MCF 10A (cell line): ENCODE measurements at regions of chr2 and their contacts with region 1.

Region 1: DNA sequence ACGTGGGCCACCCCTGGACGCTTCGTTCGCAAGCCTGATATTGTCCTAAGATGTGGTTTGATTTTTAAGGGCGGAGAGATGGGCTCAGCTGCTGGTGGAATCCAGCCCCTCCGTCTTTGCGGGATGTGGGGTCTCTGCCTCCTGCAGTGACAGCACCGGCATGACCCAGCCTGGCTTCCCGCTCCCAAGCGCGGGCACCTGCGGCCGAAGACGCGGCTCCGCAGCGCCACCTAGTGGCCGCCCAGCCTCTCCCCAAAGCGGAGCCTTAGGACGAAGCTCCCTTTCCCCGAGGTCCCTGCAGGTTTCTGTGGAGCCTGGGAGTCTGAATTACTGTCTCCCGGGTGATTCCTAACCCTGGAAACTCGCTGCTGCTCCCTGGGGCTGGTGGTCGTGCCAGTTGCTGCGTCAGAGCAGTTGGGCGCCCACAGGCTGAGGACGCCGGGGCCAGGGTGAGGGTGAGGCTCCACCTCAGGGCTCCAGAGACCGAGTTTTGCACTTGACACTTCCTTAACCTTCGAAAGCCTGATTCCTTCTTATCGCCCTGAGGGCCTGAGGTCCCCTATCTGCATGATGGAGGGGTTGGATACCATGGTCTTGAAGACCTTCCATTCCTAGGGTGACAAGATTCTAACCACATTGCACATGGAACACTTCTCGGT is 137.5 kb downstream of the TPO start:
- DNase-seq: peak; percentile 54
- H3K4me3 Mint-ChIP-seq: no peak overlapping the region
- H3K27ac Mint-ChIP-seq: no peak overlapping the region
- H3K4me1 Mint-ChIP-seq: peaks cover 13% of the 10 kb centered on the region
- H3K27me3 Mint-ChIP-seq: no peaks in the 10 kb centered on the region
- CTCF ChIP-seq: peak; percentile 98

Region 2: DNA sequence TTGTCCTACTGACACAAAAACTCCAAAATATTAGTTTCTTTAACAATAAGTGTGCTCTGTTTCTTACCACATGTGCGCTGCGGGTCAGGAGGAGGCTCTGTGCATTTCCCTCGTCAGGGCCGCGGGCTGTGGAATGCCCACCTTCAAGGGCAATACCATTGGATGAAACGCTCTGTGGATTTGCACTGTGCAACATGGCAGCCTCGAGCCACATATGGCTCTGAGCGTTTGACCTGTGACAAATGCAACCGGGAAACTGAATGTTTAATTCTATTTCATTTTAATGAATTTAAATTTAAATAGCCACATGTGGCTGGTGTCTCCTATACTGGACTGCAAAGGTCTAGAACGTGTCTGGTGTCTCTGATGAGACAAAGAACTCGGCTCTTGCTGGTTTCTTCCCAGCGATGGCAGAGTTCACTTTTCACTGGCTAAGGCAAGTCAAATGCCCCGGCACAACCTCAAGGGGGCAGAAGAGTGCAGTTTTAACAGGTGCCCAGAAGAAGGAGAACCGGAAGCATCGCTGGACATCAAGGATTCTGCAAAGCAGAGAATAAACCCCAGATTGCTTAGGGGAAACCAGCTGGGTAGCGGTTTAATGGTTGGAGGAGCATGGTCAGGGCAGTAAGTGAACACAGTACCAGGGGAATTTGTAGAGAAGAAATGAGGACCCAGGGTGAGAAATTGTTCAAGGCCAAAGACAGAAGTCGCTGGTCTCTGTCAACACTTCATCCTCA is 836.6 kb before region 1 on chr2:
- CTCF ChIA-PET with region 1: interaction called, 69 read pairs
- POLR2A ChIA-PET with region 1: no interaction called
- intact Hi-C with region 1: loop called (anchors 1 kb)
- DNase-seq: peak; percentile 75
- H3K4me3 Mint-ChIP-seq: no peak overlapping the region
- H3K27ac Mint-ChIP-seq: no peak overlapping the region
- H3K4me1 Mint-ChIP-seq: peaks cover 5% of the 10 kb centered on the region
- H3K27me3 Mint-ChIP-seq: peaks cover 28% of the 10 kb centered on the region
- CTCF ChIP-seq: peak; percentile 65

Region 3: GRCh38 chr2:950080-950966 is 600.5 kb before region 1 on chr2 and contains the start of gene SNTG2:
- CTCF ChIA-PET with region 1: interaction called, 118 read pairs
- POLR2A ChIA-PET with region 1: interaction called, 3 read pairs
- intact Hi-C with region 1: loop called (anchors 1 kb)
- DNase-seq: no peak
- H3K4me3 Mint-ChIP-seq: peak within 1 kb of the TSS; percentile 19
- H3K27ac Mint-ChIP-seq: no peak within 1 kb of the TSS
- H3K4me1 Mint-ChIP-seq: no peaks in the 10 kb centered on the region
- H3K27me3 Mint-ChIP-seq: peaks cover 11% of the 10 kb centered on the region
- CTCF ChIP-seq: no peak
- total RNA-seq, gene SNTG2: not detected in 2 replicates

Region 4: GRCh38 chr2:1563943-1564891 is 13.4 kb after region 1 on chr2:
- CTCF ChIA-PET with region 1: interaction called, 47 read pairs
- POLR2A ChIA-PET with region 1: no interaction called
- intact Hi-C with region 1: no loop called
- DNase-seq: no peak
- H3K4me3 Mint-ChIP-seq: no peak overlapping the region
- H3K27ac Mint-ChIP-seq: no peak overlapping the region
- H3K4me1 Mint-ChIP-seq: no peaks in the 10 kb centered on the region
- H3K27me3 Mint-ChIP-seq: peaks cover 11% of the 10 kb centered on the region
- CTCF ChIP-seq: no peak

Region 5: DNA sequence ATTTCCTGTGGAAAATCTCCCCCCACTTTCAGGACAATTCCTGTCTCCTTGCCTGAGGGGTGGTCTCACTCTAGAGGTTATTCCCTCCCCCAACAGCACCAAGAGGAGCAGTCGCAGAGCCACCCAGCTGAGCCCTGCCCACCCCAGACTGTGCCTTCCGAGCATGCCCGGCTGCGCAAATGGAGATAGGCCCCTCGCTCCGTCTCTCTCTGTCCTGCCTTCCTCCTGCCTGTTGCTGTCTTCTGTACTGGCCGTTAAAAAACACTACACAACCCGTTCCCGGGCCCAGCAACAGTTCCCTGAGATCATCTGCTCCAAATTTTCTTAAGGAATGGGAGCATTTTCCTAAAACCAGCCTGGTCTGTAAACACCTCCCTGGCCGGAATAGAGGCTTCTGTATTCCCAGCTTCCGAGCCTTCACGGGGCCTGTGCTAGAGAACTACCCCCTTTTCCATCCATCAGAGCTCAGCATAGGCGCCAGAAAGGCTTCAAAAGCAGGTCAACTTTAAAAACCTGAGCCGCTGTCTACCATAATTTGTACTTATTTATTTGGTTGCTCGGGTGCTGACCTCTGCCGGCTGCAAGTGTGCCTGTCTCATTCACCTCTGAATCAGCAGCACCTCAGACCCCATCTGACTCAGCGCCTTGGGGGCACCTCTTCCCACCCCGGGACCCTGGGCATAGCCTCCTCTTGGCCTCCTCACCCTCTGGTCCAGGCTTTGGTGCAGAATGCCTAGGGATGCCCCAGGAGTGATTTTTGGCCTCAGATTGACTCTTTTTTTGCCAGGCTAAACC is 34.1 kb after region 1 on chr2:
- CTCF ChIA-PET with region 1: interaction called, 11 read pairs
- POLR2A ChIA-PET with region 1: no interaction called
- intact Hi-C with region 1: no loop called
- DNase-seq: peak; percentile 34
- H3K4me3 Mint-ChIP-seq: no peak overlapping the region
- H3K27ac Mint-ChIP-seq: no peak overlapping the region
- H3K4me1 Mint-ChIP-seq: peaks cover 13% of the 10 kb centered on the region
- H3K27me3 Mint-ChIP-seq: no peaks in the 10 kb centered on the region
- CTCF ChIP-seq: peak; percentile 34

Region 6: DNA sequence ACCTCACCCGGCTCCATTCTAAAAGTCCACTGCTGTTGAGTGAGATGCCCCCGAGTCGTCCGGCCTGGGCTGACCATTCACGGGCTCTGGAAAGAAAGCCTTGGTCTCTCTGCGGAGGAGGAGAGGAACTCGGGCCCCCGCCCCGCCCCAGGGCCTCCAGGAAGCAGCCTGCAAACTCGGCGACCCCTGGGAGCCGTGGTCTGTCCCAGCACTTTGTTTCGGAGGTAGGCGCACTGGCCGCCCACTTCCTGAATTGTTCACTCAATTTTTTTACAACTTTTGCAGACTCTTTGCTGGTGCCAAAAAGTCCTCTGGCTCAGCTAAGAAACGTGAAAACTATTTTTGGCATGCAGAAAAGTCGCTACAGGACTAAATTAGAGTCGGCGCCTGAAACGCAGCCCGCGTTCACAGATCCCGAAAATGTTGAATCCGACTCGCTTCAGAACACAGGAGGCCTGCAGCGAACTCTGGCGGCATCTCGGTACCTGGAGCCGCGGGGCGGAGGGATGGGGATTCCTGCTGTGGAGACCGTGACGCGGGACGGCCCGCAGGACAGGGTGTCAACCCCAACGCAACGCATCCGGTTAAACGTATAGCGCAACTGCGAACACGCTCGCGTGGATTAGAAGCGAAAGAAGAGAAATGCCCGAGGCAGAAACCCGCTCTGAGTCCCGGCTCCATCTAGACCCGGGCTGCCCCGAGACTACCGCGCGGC is 192.1 kb after region 1 on chr2:
- CTCF ChIA-PET with region 1: interaction called, 9 read pairs
- POLR2A ChIA-PET with region 1: interaction called, 4 read pairs
- intact Hi-C with region 1: loop called (anchors 1 kb)
- DNase-seq: peak; percentile 91
- H3K4me3 Mint-ChIP-seq: peak overlapping the region; percentile 79
- H3K27ac Mint-ChIP-seq: peak overlapping the region; percentile 90
- H3K4me1 Mint-ChIP-seq: peaks cover 7% of the 10 kb centered on the region
- H3K27me3 Mint-ChIP-seq: no peaks in the 10 kb centered on the region
- CTCF ChIP-seq: peak; percentile 66

Region 7: DNA sequence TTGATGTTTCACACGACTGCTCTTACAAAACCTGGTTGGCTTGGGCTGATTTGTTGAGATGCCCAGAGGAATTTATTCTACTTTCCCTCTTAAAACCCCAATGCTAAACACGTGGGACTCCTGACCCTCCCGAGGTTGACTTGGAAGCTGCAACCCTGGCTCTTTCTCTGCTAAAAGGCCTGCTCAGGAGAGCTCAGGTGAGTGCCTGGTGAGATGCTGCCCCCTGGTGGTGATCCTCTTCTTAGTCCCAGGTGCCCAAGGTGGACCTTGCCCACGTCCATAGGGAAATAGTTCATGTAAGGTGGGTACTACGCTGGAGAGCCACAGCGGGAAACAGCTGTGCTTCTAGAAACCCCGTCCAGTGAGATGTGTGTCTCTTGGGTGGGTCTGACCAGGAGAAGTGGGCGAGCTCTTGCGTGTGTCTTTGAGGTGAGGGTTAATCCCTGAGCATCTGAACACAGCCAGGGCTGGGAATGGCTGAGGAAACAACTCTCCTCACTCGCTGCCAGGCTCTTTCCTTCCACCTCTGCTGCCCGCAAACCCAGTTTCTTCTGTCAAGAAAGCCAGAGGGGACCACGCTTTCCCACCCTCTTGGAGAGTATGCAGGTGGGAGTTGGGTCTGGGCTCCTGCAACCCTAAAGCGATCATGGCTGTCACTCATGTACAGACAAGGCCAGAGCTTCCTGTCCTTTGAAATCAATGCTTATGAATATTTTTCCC is 219.1 kb after region 1 on chr2:
- CTCF ChIA-PET with region 1: interaction called, 37 read pairs
- POLR2A ChIA-PET with region 1: no interaction called
- intact Hi-C with region 1: loop called (anchors 2 kb)
- DNase-seq: peak; percentile 81
- H3K4me3 Mint-ChIP-seq: no peak overlapping the region
- H3K27ac Mint-ChIP-seq: no peak overlapping the region
- H3K4me1 Mint-ChIP-seq: no peaks in the 10 kb centered on the region
- H3K27me3 Mint-ChIP-seq: no peaks in the 10 kb centered on the region
- CTCF ChIP-seq: peak; percentile 93